ENCODE measurements at regions of chr2 and their contacts with region 1.

Region 1: GRCh38 chr2:190319555-190320498 is at the start of gene HIBCH:
- DNase-seq: peak; percentile 82
- H3K4me3 Mint-ChIP-seq: peak within 1 kb of the TSS; percentile 94
- H3K27ac Mint-ChIP-seq: peak within 1 kb of the TSS; percentile 96
- H3K4me1 Mint-ChIP-seq: peaks cover 51% of the 10 kb centered on the region
- H3K27me3 Mint-ChIP-seq: no peaks in the 10 kb centered on the region
- total RNA-seq, gene HIBCH: 24.5 and 26.0 TPM in 2 replicates

Region 2: DNA sequence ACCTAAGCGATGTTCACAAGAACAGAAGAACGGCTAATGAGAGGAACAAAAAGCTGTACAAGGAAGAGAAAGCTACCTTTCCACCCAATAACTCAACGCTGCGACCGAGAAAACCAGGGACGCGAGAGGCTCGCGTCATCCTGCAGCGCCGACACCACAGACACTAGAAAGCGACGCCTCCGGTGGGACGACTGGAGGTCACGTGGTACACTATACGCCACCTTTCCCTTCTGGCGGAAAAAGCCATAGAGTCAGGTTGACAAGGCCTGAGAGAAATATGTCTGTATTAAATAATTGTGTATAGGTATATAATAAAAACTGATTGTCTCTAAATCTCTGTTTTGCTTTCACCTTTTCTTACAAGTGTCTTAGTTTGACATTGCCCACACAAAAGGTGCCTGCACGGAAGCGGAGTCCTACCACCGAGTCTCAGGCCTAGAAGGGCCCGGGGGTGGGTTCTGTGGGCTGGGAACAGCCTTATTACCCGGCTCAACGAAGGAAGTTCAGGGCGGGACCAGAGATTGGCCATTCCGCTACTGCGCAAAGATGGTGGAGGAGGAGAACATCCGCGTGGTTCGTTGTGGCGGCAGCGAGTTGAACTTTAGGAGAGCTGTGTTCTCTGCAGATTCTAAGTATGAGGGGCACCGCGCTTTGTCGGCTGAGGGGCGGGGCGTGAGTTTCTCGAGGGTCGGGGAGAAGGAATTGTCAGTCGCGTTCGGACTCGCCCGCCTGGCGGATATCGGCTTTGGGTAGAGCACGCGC is 878.7 kb before region 1 on chr2 and contains the start of gene WDR75:
- intact Hi-C with region 1: loop called (anchors 1 kb)
- DNase-seq: peak; percentile 87
- H3K4me3 Mint-ChIP-seq: no peak within 1 kb of the TSS
- H3K27ac Mint-ChIP-seq: peak within 1 kb of the TSS; percentile 100
- H3K4me1 Mint-ChIP-seq: peaks cover 17% of the 10 kb centered on the region
- H3K27me3 Mint-ChIP-seq: peaks cover 8% of the 10 kb centered on the region
- total RNA-seq, gene WDR75: 90.7 and 94.4 TPM in 2 replicates

Region 3: GRCh38 chr2:189762551-189763298 is 557.1 kb before region 1 on chr2 and contains the start of gene OSGEPL1:
- intact Hi-C with region 1: loop called (anchors 5 kb)
- DNase-seq: peak; percentile 90
- H3K4me3 Mint-ChIP-seq: peak within 1 kb of the TSS; percentile 92
- H3K27ac Mint-ChIP-seq: peak within 1 kb of the TSS; percentile 97
- H3K4me1 Mint-ChIP-seq: peaks cover 12% of the 10 kb centered on the region
- H3K27me3 Mint-ChIP-seq: no peaks in the 10 kb centered on the region
- total RNA-seq, gene OSGEPL1: 9.7 and 11.6 TPM in 2 replicates

Region 4: DNA sequence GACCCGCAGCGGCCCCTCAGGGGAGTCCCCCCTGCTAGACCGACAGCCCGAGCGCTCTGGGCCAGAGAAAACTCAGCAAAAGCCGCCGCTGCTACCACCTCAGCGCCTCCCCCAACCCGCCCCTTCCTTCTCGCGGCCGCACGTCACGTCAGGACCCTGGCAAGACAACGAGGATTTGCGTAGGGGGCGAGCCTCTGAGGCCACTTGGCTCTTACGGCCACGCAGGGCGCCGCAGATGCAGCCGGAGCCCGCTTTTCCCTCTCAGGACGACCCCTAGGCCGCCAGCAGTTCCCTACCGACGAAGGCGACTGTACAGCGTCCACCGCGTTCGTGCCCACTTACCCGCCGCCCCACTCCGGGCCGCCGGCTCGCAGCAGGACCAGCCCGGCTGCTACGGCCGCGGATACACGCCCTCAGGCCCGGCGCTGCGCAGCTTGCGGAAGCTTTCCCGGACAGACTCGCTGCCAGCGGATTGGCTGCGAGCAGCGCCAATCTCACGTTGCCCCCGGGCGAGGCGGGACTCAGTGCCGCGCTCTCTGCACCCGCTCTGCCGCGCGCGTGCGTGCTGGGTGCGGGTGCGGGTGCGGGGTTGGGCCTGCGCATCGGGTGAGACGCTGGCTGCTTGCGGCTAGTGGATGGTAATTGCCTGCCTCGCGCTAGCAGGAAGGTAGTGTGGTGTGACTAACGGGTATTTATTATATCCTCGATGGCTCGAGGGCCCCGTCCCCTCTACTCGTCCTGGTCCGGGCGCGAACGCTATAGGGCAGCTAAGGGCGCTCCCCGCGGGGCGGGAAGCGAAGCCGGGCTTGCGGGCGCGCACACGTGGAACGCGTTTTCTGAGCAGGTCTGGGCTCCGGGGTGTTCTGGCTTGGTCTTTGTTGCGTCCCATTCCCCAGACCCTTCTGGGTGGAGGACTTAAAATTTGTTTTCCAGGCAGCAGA is 535.6 kb before region 1 on chr2 and contains the starts of genes ORMDL1 and PMS1:
- intact Hi-C with region 1: loop called (anchors 2 kb)
- DNase-seq: peak; percentile 94
- H3K4me3 Mint-ChIP-seq: peak within 1 kb of the TSS; percentile 90
- H3K27ac Mint-ChIP-seq: peak within 1 kb of the TSS; percentile 90
- H3K4me1 Mint-ChIP-seq: peaks cover 45% of the 10 kb centered on the region
- H3K27me3 Mint-ChIP-seq: no peaks in the 10 kb centered on the region
- total RNA-seq, gene ORMDL1: 68.8 and 72.1 TPM in 2 replicates
- total RNA-seq, gene PMS1: 57.0 and 58.7 TPM in 2 replicates

Region 5: DNA sequence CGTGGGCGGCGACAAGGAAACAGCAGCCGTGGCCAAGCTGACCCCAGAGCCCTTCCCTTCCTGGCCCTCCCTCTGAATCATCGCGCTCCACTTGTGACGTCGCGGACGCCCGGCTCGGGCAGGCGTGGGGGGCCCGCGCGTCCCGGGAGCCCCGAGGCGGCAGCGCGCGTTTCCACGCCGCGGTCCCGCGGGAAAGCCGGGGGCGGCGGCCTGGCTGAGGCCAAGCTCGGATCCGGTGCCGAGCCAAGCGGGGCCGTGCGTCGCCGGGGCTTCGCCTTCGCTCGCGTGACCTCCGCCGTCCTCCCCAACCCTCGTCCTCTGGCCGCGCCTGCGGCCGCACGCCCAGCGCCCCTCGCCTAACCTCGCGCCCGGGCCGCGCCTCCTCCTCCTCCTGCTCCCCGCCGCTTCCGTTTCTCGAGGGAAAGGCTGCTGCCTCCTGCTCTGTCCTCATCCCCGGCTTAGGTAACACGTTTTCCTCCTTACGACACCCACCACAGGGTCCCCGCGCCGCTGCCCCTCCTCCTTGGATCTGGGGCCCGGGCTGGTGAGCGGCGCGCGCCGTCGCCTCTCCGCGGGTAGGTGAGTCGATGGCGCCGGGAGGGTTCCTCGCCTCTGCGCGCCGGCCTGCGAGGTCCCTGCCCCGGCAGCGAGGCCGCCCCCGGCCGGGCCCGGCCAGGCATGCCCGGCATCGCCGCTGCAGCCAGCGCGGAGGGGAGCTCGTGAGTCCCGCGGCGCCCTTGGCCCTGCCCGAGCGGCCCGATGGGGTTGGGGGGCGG is 23.9 kb after region 1 on chr2 and contains the start of gene INPP1:
- intact Hi-C with region 1: loop called (anchors 1 kb)
- DNase-seq: peak; percentile 30
- H3K4me3 Mint-ChIP-seq: peak within 1 kb of the TSS; percentile 88
- H3K27ac Mint-ChIP-seq: peak within 1 kb of the TSS; percentile 88
- H3K4me1 Mint-ChIP-seq: peaks cover 18% of the 10 kb centered on the region
- H3K27me3 Mint-ChIP-seq: peaks cover 6% of the 10 kb centered on the region
- total RNA-seq, gene INPP1: 12.8 and 13.6 TPM in 2 replicates

Region 6: GRCh38 chr2:190369635-190370034 is 49.8 kb after region 1 on chr2:
- intact Hi-C with region 1: loop called (anchors 5 kb)
- DNase-seq: no peak
- H3K4me3 Mint-ChIP-seq: no peak overlapping the region
- H3K27ac Mint-ChIP-seq: no peak overlapping the region
- H3K4me1 Mint-ChIP-seq: no peaks in the 10 kb centered on the region
- H3K27me3 Mint-ChIP-seq: no peaks in the 10 kb centered on the region

Region 7: GRCh38 chr2:191020221-191020741 is 700.5 kb after region 1 on chr2:
- intact Hi-C with region 1: loop called (anchors 10 kb)
- DNase-seq: peak; percentile 96
- H3K4me3 Mint-ChIP-seq: no peak overlapping the region
- H3K27ac Mint-ChIP-seq: no peak overlapping the region
- H3K4me1 Mint-ChIP-seq: peaks cover 35% of the 10 kb centered on the region
- H3K27me3 Mint-ChIP-seq: no peaks in the 10 kb centered on the region

Measured in activated T-helper 2 cell treated with anti-CD3 and anti-CD28 coated beads, Interferon-gamma antibody, Interleukin-2, Interleukin-4, amounts not matched to agents 10 μg/mL and 5 μg/mL and 100 μg/mL, durations not matched to agents 14 hours and 24 hours and 36 hours (primary cell).